ENCODE measurements at regions of chr20 and their contacts with region 1.

Region 1: DNA sequence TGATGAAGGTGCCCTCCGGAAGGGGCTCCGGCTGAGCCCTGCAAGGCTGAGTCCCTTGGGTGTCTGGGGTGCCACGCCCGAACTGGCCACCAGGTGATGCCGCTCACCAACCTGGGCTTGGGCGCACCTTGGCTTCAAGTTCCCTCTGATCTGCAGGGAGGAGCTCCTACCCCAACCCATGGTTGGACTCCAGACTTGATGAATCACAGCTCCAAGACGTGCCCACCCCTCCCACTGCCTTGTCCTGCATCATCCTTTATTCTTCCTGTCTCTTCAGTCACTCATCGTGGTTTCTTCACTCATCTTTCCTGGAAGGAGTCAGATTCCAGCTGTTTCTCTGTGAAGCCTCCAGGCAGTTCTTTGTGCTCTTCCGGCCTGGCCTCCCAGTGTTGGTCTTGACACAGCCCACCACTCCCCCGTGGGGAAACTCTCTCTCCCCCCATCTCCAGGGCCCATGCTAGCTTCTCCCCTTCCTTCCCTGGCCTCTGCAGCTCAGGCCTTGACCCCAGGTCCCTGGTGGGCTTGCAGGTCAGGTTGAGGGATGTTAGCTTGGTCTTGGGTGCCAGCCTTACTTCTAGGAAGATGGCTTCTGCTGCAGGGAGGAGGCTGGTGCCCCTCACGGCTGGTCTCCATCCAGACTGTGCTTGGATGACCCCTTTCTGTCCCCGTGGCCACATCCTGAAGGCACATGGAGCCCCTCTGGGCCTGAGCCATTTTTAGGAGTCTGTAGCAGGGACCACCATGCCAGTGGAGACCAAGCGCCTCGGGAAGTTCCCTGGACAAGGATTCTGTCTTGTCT is 2.6 kb upstream of the ZBP1 start:
- DNase-seq: peak; percentile 82
- H3K4me3 Mint-ChIP-seq: no peak overlapping the region
- H3K27ac Mint-ChIP-seq: peak overlapping the region; percentile 68
- H3K4me1 Mint-ChIP-seq: peaks cover 65% of the 10 kb centered on the region
- H3K27me3 Mint-ChIP-seq: peaks cover 19% of the 10 kb centered on the region

Region 2: GRCh38 chr20:57391074-57391554 is 231.7 kb before region 1 on chr20 and contains the start of gene RBM38:
- CTCF ChIA-PET with region 1: interaction called, 7 read pairs
- POLR2A ChIA-PET with region 1: interaction called, 29 read pairs
- DNase-seq: peak; percentile 83
- H3K4me3 Mint-ChIP-seq: peak within 1 kb of the TSS; percentile 98
- H3K27ac Mint-ChIP-seq: peak within 1 kb of the TSS; percentile 96
- H3K4me1 Mint-ChIP-seq: peaks cover 51% of the 10 kb centered on the region
- H3K27me3 Mint-ChIP-seq: no peaks in the 10 kb centered on the region
- total RNA-seq, gene RBM38: 116 to 119 TPM

Region 3: GRCh38 chr20:57432874-57433491 is 189.8 kb before region 1 on chr20:
- CTCF ChIA-PET with region 1: no interaction called
- POLR2A ChIA-PET with region 1: interaction called, 13 read pairs
- DNase-seq: peak; percentile 88
- H3K4me3 Mint-ChIP-seq: peak overlapping the region; percentile 50
- H3K27ac Mint-ChIP-seq: peak overlapping the region; percentile 88
- H3K4me1 Mint-ChIP-seq: peaks cover 66% of the 10 kb centered on the region
- H3K27me3 Mint-ChIP-seq: no peaks in the 10 kb centered on the region

Region 4: GRCh38 chr20:57596998-57597939 is 25.5 kb before region 1 on chr20:
- CTCF ChIA-PET with region 1: interaction called, 65 read pairs
- POLR2A ChIA-PET with region 1: interaction called, 21 read pairs
- DNase-seq: peak; percentile 72
- H3K4me3 Mint-ChIP-seq: no peak overlapping the region
- H3K27ac Mint-ChIP-seq: no peak overlapping the region
- H3K4me1 Mint-ChIP-seq: peaks cover 17% of the 10 kb centered on the region
- H3K27me3 Mint-ChIP-seq: peaks cover 36% of the 10 kb centered on the region

Region 5: DNA sequence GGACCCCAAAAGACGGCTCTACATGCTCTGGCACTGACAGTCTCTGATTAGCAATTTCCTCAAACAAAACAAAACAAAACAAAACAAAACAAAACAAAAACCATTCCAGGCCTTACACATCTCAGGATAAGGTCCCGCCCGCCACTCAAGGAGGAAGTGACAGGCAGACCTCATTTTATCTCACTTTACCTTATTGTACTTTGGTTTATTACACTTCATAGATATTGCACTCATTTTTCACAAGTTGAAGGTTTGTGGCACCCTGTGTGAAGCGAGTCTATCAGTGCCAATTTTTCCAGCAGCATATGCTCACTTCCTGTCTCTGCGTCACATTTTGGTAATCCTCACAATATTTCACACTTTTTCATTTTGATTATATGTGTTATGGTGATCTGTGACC is 17.7 kb before region 1 on chr20:
- CTCF ChIA-PET with region 1: interaction called, 65 read pairs
- POLR2A ChIA-PET with region 1: interaction called, 21 read pairs
- DNase-seq: no peak
- H3K4me3 Mint-ChIP-seq: no peak overlapping the region
- H3K27ac Mint-ChIP-seq: no peak overlapping the region
- H3K4me1 Mint-ChIP-seq: peaks cover 29% of the 10 kb centered on the region
- H3K27me3 Mint-ChIP-seq: peaks cover 20% of the 10 kb centered on the region

Region 6: GRCh38 chr20:57654363-57654997 is 31.7 kb after region 1 on chr20:
- CTCF ChIA-PET with region 1: interaction called, 12 read pairs
- POLR2A ChIA-PET with region 1: interaction called, 5 read pairs
- DNase-seq: peak; percentile 60
- H3K4me3 Mint-ChIP-seq: no peak overlapping the region
- H3K27ac Mint-ChIP-seq: no peak overlapping the region
- H3K4me1 Mint-ChIP-seq: peaks cover 11% of the 10 kb centered on the region
- H3K27me3 Mint-ChIP-seq: peaks cover 2% of the 10 kb centered on the region

Region 7: DNA sequence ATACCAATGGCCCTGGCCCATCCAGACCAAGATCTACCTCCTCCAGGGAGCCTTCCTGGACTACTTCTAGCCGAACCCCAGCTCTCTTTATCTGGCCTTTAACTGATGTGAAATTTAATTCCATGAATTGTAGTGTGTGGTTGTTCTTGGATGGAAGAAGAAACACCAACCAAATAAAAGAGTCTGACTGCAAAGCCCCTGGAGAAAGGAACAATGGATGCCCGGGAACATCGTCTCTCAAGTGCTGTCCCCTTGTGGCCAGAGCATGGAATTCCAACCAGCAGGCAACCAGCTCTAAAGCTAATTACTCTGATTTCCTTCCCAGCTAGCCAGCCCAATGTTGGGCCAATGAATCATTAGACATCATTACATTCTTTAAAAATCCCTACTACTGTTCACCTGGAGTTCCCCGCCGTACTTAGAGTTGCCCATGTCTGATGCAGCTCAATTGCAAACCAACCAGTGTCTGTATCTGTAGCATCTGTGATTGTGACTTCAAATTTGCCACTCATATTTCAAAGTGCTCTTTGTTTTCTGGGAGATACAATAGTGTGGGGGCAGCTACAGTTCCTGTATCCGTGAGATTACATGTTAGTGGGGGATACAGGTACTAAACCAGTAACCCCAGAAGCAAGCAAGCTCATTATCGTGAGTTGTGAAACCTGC is 464.5 kb after region 1 on chr20:
- CTCF ChIA-PET with region 1: interaction called, 10 read pairs
- POLR2A ChIA-PET with region 1: interaction called, 4 read pairs
- DNase-seq: no peak
- H3K4me3 Mint-ChIP-seq: no peak overlapping the region
- H3K27ac Mint-ChIP-seq: no peak overlapping the region
- H3K4me1 Mint-ChIP-seq: no peaks in the 10 kb centered on the region
- H3K27me3 Mint-ChIP-seq: no peaks in the 10 kb centered on the region

Region 8: DNA sequence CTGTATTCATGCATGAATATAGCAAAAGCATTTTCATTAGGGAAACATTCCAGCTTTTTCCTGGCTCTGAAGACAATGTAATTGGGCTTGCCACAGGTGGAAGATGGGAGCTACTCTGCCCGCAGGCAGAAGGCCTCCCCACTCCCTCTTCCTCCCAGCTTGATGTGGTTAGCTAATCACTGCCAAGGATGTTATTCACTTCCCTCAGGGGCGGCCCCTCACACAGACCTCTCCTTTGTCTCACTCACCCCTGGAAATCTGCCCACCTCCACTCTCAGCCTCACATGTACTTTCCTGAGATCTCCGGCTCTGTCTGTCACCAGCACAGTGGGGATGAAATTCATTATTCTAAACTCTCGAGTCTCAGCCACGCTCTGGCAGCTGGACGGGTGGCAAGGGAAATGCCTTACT is 504.9 kb after region 1 on chr20:
- CTCF ChIA-PET with region 1: no interaction called
- POLR2A ChIA-PET with region 1: no interaction called
- DNase-seq: no peak
- H3K4me3 Mint-ChIP-seq: no peak overlapping the region
- H3K27ac Mint-ChIP-seq: no peak overlapping the region
- H3K4me1 Mint-ChIP-seq: peaks cover 1% of the 10 kb centered on the region
- H3K27me3 Mint-ChIP-seq: peaks cover 45% of the 10 kb centered on the region